HEK293T (cell line): ENCODE measurements at regions of chr11 and their contacts with region 1.

Region 1: DNA sequence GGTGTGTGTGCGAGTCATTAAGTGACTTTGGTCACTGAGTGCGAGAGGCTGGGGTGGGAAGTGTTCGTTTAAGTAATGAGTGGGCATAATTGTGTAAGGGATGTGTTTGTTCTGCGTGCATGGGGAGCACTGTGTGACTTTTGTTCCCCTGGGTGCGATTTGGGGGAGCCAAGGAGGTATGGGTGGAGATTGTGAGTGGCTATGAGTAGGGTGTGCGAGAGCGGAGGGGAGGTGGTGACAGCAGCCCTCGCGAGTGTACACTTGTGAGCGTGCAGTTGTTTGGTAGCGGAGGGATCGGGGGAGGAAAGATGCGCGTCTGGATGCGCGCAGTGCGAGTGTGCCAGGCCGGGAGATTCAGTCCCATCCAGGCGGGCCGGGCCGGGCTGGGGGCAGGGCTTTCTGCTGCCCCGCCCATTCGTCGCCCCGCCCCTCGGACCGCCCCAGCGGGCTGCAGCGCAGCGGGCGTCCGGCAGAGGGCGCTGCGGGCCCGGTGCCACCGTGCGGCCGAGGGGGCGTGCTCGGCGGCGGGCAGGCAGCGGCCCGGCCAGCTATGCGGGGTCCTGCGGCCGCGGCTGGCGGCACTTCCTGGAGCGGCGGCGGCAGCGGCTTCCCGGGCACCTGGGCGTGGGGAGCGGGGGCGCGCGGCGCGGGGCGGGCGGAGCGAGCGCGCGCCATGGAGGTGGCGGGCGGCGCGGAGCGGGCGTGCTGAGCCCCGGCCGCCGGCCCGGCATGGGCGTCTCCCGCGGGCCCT is at the start of gene DGKZ:
- DNase-seq: peak; percentile 98

Region 2: DNA sequence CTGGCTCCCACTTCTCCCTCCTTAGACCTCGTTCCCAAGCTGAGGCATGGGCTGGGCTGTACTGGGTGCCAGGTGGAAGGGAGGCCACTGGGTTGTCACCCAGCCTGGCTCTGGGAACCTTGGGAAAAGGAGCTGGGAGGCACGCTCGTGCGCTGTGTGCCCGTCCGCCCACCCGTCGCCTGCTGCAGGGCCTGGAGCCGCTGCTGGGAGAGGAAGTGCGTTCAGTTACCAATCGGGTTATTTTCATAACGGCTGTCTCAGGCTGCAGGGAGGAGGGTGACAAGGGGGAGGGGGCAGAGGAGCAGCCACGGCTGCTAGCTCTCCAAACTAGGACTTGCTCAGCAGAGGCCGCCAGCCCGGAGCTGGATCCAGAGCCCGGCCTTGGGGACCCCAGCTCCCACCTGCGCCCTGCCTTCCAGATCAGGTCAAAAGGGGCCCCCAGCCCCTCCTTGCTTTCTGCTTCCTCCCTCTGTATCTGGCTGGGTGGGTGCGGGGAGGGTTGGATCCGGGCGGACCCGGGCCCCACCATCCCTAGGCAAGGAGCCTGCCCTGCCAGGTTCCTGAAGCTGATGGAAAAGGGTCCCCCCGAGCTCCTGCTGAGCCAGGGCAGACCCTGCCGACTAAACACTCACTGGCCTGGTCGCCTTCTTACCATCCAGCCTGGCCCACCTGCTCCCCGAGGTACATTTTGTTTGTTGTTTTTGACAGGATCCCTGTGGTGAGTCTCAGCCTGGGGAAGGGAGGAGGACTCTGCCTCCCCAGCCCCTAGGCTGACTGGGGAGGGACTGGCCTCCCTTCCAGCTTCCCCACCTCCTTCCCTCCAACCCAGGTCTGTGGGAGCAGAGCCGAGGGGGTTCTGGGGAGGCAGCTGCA is 14.5 kb after region 1 on chr11:
- CTCF ChIA-PET with region 1: interaction called, 30 read pairs
- POLR2A ChIA-PET with region 1: interaction called, 7 read pairs
- DNase-seq: peak; percentile 58

Region 3: DNA sequence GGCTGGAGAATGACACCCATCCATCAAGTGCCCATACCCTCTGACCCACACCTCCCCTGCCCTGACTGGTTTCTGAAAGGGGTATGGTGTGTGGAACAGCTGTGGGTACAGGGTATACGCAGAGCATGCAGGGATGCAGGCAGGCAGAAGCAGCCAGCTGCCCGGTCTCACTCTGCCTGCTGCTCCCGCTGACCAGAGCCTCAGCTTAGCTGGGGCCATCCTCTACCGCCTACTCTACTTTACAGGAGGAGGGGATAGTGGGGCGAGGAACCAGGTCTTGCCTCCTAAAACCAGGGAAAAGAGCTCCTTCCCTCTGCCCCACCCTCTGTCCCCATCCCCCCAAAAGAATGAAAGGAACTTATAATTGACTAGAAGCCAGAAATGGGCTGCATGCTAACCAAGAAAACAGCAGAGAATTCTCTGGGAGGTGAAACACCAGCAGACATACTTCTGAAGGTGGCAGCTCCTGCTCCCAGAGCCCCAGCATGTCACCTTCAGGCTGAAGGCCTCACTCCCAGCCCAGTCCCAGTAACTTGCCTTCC is 57.5 kb after region 1 on chr11:
- CTCF ChIA-PET with region 1: no interaction called
- POLR2A ChIA-PET with region 1: no interaction called
- DNase-seq: no peak